Adrenal gland (tissue), 19 donors: ENCODE measurements at regions of chr3 and their contacts with region 1.

Region 1: GRCh38 chr3:18562364-18563154 is 137.4 kb upstream of the SATB1 start:
- DNase-seq: no peak
- H3K4me3 ChIP-seq: no peak overlapping the region
- H3K27ac ChIP-seq: no peak overlapping the region
- H3K4me1 ChIP-seq: no peaks in the 10 kb centered on the region
- H3K27me3 ChIP-seq: no peaks in the 10 kb centered on the region
- CTCF ChIP-seq: no peak
- POLR2A ChIP-seq: no peak

Region 2: GRCh38 chr3:18998069-18998468 is 435.5 kb after region 1 on chr3:
- intact Hi-C with region 1: loop called in 1 of 2 experiments (anchors 10 kb)
- DNase-seq: no peak
- H3K4me3 ChIP-seq: no peak overlapping the region
- H3K27ac ChIP-seq: no peak overlapping the region
- H3K4me1 ChIP-seq: no peaks in the 10 kb centered on the region
- H3K27me3 ChIP-seq: no peaks in the 10 kb centered on the region
- CTCF ChIP-seq: no peak
- POLR2A ChIP-seq: no peak